Activated B cell treated with CpG ODN at 0.5 μM for 24 hours (primary cell): ENCODE measurements at regions of chr16 and their contacts with region 1.

Region 1: GRCh38 chr16:30844671-30845449 is 49.0 kb downstream of the BCL7C start:
- DNase-seq: peak; percentile 31
- ATAC-seq: peak; percentile 93
- H3K4me3 Mint-ChIP-seq: peak overlapping the region; percentile 65
- H3K27ac Mint-ChIP-seq: peak overlapping the region; percentile 77
- H3K4me1 Mint-ChIP-seq: peaks cover 11% of the 10 kb centered on the region
- H3K27me3 Mint-ChIP-seq: no peaks in the 10 kb centered on the region
- CTCF ChIP-seq: peak; percentile 71

Region 2: DNA sequence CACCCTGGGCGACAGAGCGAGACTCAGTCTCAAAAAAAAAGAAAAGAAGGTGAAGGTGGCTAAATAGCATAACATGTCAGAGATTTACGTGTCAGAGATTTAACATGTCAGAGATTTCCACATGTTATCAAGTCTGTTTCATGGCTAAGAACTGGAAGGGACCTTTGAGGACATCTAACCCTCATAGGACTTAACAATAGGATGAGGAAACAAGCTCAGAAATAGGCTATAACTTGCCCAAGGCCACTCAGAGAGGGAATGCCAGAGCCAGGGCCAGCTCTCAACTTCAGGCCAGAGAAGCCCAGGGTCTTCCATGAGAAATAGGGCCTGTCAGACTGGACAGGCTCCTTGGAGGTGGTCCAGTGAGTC is 31.1 kb before region 1 on chr16:
- CTCF ChIA-PET with region 1: interaction called, 17 read pairs
- POLR2A ChIA-PET with region 1: interaction called, 8 read pairs
- intact Hi-C with region 1: no loop called
- DNase-seq: no peak
- ATAC-seq: no peak
- H3K4me3 Mint-ChIP-seq: peak overlapping the region; percentile 84
- H3K27ac Mint-ChIP-seq: peak overlapping the region; percentile 75
- H3K4me1 Mint-ChIP-seq: peaks cover 13% of the 10 kb centered on the region
- H3K27me3 Mint-ChIP-seq: no peaks in the 10 kb centered on the region
- CTCF ChIP-seq: no peak

Region 3: DNA sequence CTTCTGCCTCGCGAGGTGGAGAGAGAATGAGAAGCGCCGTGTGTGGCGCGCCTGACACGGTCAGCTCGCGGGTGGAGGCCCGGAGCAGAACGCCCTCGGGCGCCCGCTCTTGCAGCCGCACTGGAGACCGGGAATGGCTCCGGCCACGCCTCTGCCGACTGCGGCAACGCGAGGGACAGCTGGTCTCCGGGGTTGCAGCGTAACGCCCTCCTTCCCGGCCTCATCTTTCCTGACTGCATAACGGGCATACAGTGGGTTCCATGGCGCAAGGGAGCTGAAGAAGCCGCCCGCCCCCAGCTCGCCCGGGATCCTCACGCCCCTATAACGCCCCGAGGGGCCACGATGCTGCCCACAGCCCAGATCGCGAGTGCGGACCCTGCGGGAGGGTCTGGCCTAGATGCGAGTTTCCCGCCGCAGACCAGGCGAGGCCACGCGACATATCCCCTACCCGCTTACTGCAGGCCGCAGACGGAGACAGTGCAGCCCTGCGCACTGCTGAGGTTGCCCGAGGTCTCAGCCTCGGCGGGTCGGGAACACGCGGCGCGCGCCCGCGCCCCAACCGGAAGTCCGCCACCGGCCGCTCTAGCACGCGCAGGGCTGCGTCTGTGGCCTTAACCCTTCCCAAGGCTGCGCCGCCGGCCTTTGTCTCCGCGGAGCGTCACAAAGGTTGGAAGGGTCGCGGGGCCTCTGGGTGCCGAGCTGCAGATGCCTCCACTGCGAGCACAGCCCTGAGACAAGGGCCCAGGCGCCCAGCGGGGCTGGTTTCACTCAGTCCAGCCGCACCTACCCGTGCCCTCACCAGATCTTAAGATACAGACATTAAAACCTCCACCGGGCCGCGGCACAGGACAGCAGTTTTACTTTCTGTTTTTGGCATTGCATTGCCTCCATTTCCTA is 30.2 kb after region 1 on chr16:
- CTCF ChIA-PET with region 1: interaction called, 18 read pairs
- POLR2A ChIA-PET with region 1: interaction called, 29 read pairs
- intact Hi-C with region 1: loop called (anchors 2 kb)
- DNase-seq: peak; percentile 90
- ATAC-seq: peak; percentile 83
- H3K4me3 Mint-ChIP-seq: peak overlapping the region; percentile 94
- H3K27ac Mint-ChIP-seq: peak overlapping the region; percentile 95
- H3K4me1 Mint-ChIP-seq: peaks cover 37% of the 10 kb centered on the region
- H3K27me3 Mint-ChIP-seq: no peaks in the 10 kb centered on the region
- CTCF ChIP-seq: no peak

Region 4: GRCh38 chr16:30902029-30902972 is 57.4 kb after region 1 on chr16:
- CTCF ChIA-PET with region 1: interaction called, 96 read pairs
- POLR2A ChIA-PET with region 1: interaction called, 48 read pairs
- intact Hi-C with region 1: loop called (anchors 1 kb)
- DNase-seq: peak; percentile 77
- ATAC-seq: peak; percentile 78
- H3K4me3 Mint-ChIP-seq: peak overlapping the region; percentile 95
- H3K27ac Mint-ChIP-seq: peak overlapping the region; percentile 95
- H3K4me1 Mint-ChIP-seq: peaks cover 31% of the 10 kb centered on the region
- H3K27me3 Mint-ChIP-seq: no peaks in the 10 kb centered on the region
- CTCF ChIP-seq: no peak

Region 5: GRCh38 chr16:30997000-30997886 is 152.4 kb after region 1 on chr16:
- CTCF ChIA-PET with region 1: no interaction called
- POLR2A ChIA-PET with region 1: no interaction called
- intact Hi-C with region 1: no loop called
- DNase-seq: peak; percentile 68
- ATAC-seq: peak; percentile 99
- H3K4me3 Mint-ChIP-seq: peak overlapping the region; percentile 87
- H3K27ac Mint-ChIP-seq: peak overlapping the region; percentile 76
- H3K4me1 Mint-ChIP-seq: peaks cover 12% of the 10 kb centered on the region
- H3K27me3 Mint-ChIP-seq: no peaks in the 10 kb centered on the region
- CTCF ChIP-seq: no peak

Region 6: GRCh38 chr16:31440516-31441184 is 595.8 kb after region 1 on chr16:
- CTCF ChIA-PET with region 1: interaction called, 3 read pairs
- POLR2A ChIA-PET with region 1: no interaction called
- intact Hi-C with region 1: loop called (anchors 1 kb)
- DNase-seq: no peak
- ATAC-seq: no peak
- H3K4me3 Mint-ChIP-seq: peak overlapping the region; percentile 24
- H3K27ac Mint-ChIP-seq: no peak overlapping the region
- H3K4me1 Mint-ChIP-seq: peaks cover 19% of the 10 kb centered on the region
- H3K27me3 Mint-ChIP-seq: peaks cover 2% of the 10 kb centered on the region
- CTCF ChIP-seq: no peak